ENCODE measurements at regions of chr5 and their contacts with region 1.

Region 1: GRCh38 chr5:71782771-71783770 is 64.0 kb downstream of the CARTPT start:
- DNase-seq: peak; percentile 95
- H3K4me3 ChIP-seq: peak overlapping the region; percentile 21 to 40
- H3K27ac ChIP-seq: peak overlapping the region in 1 of 2 donors; percentile 74
- H3K4me1 ChIP-seq: no peaks in the 10 kb centered on the region
- H3K27me3 ChIP-seq: no peaks in the 10 kb centered on the region
- CTCF ChIP-seq: peak; percentile 79 to 87 (median 86)
- POLR2A ChIP-seq: no peak

Region 2: DNA sequence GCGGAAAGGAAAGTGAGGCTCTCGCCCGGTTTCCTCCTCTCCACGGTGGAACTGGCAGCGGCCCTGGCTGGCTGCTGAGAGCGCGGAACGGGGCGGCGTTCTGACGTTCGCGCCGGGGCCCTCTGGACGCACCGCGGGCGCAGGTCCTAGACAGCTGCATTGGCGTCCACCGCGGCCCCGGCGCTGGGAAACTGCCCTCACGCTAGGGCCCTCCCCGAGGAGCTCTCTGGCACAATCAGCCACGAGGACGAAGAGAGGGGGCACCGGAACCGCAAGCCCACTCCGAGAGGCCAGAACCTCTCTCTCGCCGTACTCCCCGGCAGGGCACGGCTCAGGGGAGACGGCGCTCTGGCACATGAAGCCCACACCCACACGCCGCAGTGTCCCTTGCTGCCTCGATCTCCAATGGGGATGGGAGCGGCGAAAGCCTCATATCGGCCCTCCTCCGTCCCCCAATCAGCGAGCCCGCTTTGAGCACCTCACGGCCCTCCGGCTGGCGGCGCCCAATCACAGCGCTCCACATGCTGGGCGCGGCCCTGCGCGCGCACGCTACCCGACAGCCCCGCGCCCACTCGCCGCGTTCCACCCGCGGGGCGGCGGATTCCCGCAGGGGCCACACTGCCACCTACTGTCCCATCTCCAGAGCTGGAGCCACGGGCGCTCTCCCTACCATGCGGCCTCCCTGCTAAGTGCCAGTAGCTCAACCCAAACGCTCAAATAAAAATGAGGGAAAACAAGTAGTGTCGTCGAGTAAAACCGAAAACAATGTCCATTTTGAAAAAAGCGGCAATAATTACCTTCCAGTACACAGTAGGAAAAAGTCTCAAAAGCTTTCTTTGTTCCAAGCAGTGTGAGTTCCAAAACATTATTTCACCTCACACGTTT is 525.1 kb after region 1 on chr5:
- intact Hi-C with region 1: loop called (anchors 5 kb)
- DNase-seq: peak; percentile 98
- H3K4me3 ChIP-seq: peak overlapping the region; percentile 67 to 79
- H3K27ac ChIP-seq: peak overlapping the region; percentile 88 to 93
- H3K4me1 ChIP-seq: no peaks in the 10 kb centered on the region
- H3K27me3 ChIP-seq: no peaks in the 10 kb centered on the region
- CTCF ChIP-seq: peak; percentile 82 to 97 (median 95)
- POLR2A ChIP-seq: peak; percentile 38

Measured in testis (tissue), 5 donors.